ENCODE measurements at regions of chr6 and their contacts with region 1.

Region 1: DNA sequence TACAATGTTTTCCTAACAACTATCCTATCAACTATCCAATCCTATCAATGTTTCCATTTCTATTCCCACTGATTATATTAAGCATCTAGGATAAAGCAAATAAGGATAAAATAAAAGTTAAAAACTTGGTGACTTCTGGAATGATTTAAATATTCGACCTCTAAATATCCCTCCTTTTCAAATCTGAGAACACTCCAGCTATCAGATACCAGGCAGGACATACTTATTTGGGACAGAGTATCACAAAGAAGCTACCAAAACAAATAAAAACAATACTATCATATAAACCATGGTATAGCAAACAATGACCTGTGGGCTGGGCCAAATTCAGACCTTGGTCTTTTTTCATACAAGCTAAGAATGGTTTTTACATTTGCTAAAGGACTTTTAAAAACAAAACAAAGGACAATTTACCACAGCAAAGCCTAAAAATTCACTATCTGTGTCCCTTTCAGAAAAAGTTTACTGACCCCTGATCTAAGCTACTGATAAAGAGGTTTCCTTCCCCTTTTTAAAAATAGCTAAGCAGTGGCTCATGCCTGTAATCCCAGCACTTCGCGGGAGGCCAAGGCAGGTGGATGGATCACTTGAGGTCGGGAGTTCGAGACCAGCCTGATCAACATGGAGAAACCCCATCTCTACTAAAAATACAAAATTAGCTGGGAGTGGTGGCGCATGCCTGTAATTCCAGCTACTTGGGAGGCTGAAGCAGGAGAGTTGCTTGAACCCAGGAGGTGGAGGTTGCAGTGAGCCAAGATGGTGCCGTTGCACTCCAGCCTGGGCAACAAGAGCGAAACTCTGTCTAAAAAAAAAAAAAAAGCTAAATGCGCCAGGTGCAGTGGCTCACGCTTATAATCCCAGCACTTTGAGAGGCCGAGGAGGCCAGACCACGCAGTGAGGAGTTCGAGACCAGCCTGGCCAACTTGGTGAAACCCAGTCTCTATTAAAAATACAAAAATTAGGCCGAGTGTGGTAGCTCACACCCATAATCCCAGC is 6.0 kb downstream of the NUP153 start:
- DNase-seq: no peak
- ATAC-seq: no peak
- H3K4me3 ChIP-seq: no peak overlapping the region
- H3K4me3 Mint-ChIP-seq: peak overlapping the region; percentile 60
- H3K27ac ChIP-seq: peak overlapping the region in 1 of 2 donors; percentile 58
- H3K27ac Mint-ChIP-seq: peak overlapping the region; percentile 79
- H3K4me1 ChIP-seq: peaks cover 50 to 56% of the 10 kb centered on the region in 2 donors
- H3K4me1 Mint-ChIP-seq: peaks cover 55% of the 10 kb centered on the region
- H3K27me3 ChIP-seq: no peaks in the 10 kb centered on the region
- H3K27me3 Mint-ChIP-seq: no peaks in the 10 kb centered on the region
- CTCF ChIP-seq: no peak

Region 2: DNA sequence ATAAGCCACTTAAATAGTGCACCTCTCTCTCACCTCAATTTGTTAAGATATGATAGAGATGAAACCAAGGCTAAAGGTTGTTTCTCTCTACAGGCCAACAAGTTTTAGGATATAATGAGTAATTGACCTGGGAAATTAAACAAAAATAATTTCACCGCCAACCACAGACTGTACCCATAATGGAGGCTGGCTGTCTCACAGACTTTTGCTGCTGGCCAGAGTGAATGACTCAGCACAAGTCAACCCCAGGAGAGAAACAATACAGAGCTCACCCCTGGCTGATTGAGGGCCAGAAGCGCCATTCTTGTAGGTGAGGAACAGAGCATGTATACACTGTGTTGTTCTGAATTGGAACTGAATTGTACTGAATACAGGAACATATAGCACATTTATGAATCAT is 207.4 kb before region 1 on chr6:
- CTCF ChIA-PET with region 1: no interaction called
- POLR2A ChIA-PET with region 1: no interaction called
- intact Hi-C with region 1: no loop called
- DNase-seq: no peak
- ATAC-seq: no peak
- H3K4me3 ChIP-seq: no peak overlapping the region
- H3K4me3 Mint-ChIP-seq: no peak overlapping the region
- H3K27ac ChIP-seq: no peak overlapping the region
- H3K27ac Mint-ChIP-seq: no peak overlapping the region
- H3K4me1 ChIP-seq: no peaks in the 10 kb centered on the region
- H3K4me1 Mint-ChIP-seq: no peaks in the 10 kb centered on the region
- H3K27me3 ChIP-seq: peaks cover 0 to 8% (median 0%) of the 10 kb centered on the region in 4 experiments
- H3K27me3 Mint-ChIP-seq: peaks cover 31% of the 10 kb centered on the region
- CTCF ChIP-seq: no peak

Region 3: GRCh38 chr6:17599885-17600526 is 100.7 kb before region 1 on chr6 and contains the start of gene FAM8A1:
- CTCF ChIA-PET with region 1: interaction called, 11 read pairs
- POLR2A ChIA-PET with region 1: interaction called, 10 read pairs
- intact Hi-C with region 1: no loop called
- DNase-seq: peak; percentile 93
- ATAC-seq: peak; percentile 90
- H3K4me3 ChIP-seq: peak within 1 kb of the TSS; percentile 51 to 84 (median 79)
- H3K4me3 Mint-ChIP-seq: peak within 1 kb of the TSS; percentile 91
- H3K27ac ChIP-seq: peak within 1 kb of the TSS; percentile 54 to 74
- H3K27ac Mint-ChIP-seq: peak within 1 kb of the TSS; percentile 86
- H3K4me1 ChIP-seq: peaks cover 13% of the 10 kb centered on the region in 2 donors
- H3K4me1 Mint-ChIP-seq: peaks cover 10% of the 10 kb centered on the region
- H3K27me3 ChIP-seq: no peaks in the 10 kb centered on the region
- H3K27me3 Mint-ChIP-seq: no peaks in the 10 kb centered on the region
- CTCF ChIP-seq: peak; percentile 41
- total RNA-seq, gene FAM8A1: 5.2 and 7.0 TPM in 2 replicates

Region 4: GRCh38 chr6:17666646-17667045 is 34.1 kb before region 1 on chr6:
- CTCF ChIA-PET with region 1: interaction called, 8 read pairs
- POLR2A ChIA-PET with region 1: interaction called, 4 read pairs
- intact Hi-C with region 1: loop called (anchors 5 kb)
- DNase-seq: no peak
- ATAC-seq: no peak
- H3K4me3 ChIP-seq: no peak overlapping the region
- H3K4me3 Mint-ChIP-seq: no peak overlapping the region
- H3K27ac ChIP-seq: no peak overlapping the region
- H3K27ac Mint-ChIP-seq: no peak overlapping the region
- H3K4me1 ChIP-seq: no peaks in the 10 kb centered on the region
- H3K4me1 Mint-ChIP-seq: no peaks in the 10 kb centered on the region
- H3K27me3 ChIP-seq: no peaks in the 10 kb centered on the region
- H3K27me3 Mint-ChIP-seq: no peaks in the 10 kb centered on the region
- CTCF ChIP-seq: no peak

Region 5: GRCh38 chr6:17688481-17688880 is 12.2 kb before region 1 on chr6:
- CTCF ChIA-PET with region 1: interaction called, 35 read pairs
- POLR2A ChIA-PET with region 1: interaction called, 22 read pairs
- intact Hi-C with region 1: no loop called
- DNase-seq: no peak
- ATAC-seq: no peak
- H3K4me3 ChIP-seq: no peak overlapping the region
- H3K4me3 Mint-ChIP-seq: no peak overlapping the region
- H3K27ac ChIP-seq: no peak overlapping the region
- H3K27ac Mint-ChIP-seq: no peak overlapping the region
- H3K4me1 ChIP-seq: peaks cover 15 to 17% of the 10 kb centered on the region in 2 donors
- H3K4me1 Mint-ChIP-seq: peaks cover 46% of the 10 kb centered on the region
- H3K27me3 ChIP-seq: no peaks in the 10 kb centered on the region
- H3K27me3 Mint-ChIP-seq: no peaks in the 10 kb centered on the region
- CTCF ChIP-seq: no peak

Region 6: DNA sequence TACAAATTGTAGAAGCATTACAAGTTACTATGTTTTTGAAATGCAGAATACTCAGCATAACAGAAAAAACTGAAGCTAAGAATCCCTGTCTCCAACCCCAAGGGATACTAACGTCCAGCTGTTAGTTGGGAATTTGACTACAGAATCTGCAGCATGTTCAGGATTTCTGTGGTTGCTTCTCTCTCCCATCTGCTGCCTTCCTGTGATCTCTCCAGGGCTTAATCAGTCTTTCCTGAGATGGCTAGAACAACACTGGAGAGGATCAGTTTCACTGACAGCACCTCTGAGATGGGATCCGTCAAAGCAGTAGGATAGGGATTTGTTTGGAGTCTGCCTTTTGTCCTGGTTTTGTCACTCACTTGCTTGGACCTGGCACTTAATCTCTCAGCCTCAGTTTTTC is 79.3 kb after region 1 on chr6:
- CTCF ChIA-PET with region 1: no interaction called
- POLR2A ChIA-PET with region 1: no interaction called
- intact Hi-C with region 1: no loop called
- DNase-seq: no peak
- ATAC-seq: no peak
- H3K4me3 ChIP-seq: no peak overlapping the region
- H3K4me3 Mint-ChIP-seq: no peak overlapping the region
- H3K27ac ChIP-seq: no peak overlapping the region
- H3K27ac Mint-ChIP-seq: no peak overlapping the region
- H3K4me1 ChIP-seq: no peaks in the 10 kb centered on the region
- H3K4me1 Mint-ChIP-seq: no peaks in the 10 kb centered on the region
- H3K27me3 ChIP-seq: no peaks in the 10 kb centered on the region
- H3K27me3 Mint-ChIP-seq: no peaks in the 10 kb centered on the region
- CTCF ChIP-seq: no peak

Measured in B cell (primary cell).